GM12878 (cell line): ENCODE measurements at regions of chr11 and their contacts with region 1.

Region 1: DNA sequence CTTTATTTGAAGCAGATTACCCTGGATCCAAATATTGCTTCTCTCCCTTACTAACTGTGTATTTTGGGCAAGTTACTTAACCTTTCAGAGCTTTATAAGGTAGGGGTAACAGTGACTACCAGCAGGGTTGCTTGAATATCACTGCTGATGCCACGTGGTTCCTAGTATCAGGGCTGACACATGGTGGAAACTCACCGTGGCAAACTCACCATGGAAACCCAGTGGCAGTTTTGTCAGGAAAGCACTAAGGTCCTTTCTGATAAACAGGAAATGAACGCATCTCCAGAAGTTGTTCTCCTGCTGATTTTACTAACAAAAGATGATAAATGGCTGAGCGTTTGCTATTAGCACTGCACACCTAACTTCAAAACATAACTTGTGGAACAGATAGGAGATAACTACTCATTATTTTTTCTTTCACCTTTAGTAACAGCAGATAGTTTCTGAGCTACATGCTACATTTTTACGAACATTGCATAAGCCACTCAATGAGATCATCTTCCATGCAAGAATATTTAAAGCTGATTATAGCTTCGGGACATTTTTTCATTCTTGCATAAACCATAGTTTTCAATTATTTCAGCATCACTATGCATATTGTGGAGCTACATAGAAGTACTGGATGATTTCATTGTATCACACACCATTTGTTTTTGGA is 59.7 kb upstream of the RAG2 start:
- DNase-seq: no peak
- ATAC-seq: no peak
- H3K4me3 ChIP-seq: no peak overlapping the region
- H3K27ac ChIP-seq: no peak overlapping the region
- H3K4me1 ChIP-seq: no peaks in the 10 kb centered on the region
- H3K27me3 ChIP-seq: no peaks in the 10 kb centered on the region
- CTCF ChIP-seq: no peak
- EP300 ChIP-seq: no peak
- POLR2A ChIP-seq: no peak
- RAD21 ChIP-seq: no peak

Region 2: DNA sequence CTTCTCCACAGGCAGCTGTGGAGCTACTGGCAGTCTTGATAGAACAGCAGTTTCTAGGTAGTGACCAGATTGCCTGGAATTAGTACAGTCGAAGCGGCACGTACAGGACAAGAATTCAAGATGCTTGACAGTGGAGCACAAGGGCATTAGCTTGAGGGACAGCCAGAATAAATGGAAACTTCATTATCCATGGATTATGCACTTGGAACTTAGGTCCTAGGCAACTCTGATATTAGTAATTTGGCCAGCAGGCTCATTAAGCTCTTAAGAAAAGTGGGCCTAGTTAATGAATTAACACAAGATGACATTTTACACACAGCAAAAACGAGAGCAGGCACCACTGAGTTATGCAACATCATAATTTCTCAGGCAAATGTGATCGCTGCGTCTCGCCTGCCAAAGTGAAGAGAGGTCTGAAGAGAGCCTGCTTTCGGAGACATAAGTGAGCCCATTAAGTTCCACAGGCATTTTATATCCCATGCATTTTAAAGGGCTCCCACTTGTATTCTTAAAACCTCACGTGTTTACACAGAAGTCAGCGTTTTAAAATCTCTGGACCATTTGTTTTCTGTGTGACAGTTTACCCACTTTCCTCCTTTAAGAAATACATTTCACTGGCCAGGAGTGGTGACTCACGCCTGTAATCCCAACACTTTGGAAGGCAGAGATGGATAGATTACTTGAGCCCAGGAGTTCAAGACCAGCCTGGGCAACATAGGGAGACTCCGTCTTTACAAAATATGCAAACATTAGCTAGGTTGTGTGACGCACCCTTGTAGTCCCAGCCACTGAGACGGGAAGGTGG is 434.7 kb before region 1 on chr11:
- CTCF ChIA-PET with region 1: no interaction called
- POLR2A ChIA-PET with region 1: no interaction called
- RAD21 ChIA-PET with region 1: no interaction called
- SMC1A ChIA-PET with region 1: no interaction called
- in situ Hi-C with region 1: no loop called
- intact Hi-C with region 1: no loop called
- DNase-seq: no peak
- ATAC-seq: no peak
- H3K4me3 ChIP-seq: no peak overlapping the region
- H3K27ac ChIP-seq: no peak overlapping the region
- H3K4me1 ChIP-seq: no peaks in the 10 kb centered on the region
- H3K27me3 ChIP-seq: no peaks in the 10 kb centered on the region
- CTCF ChIP-seq: no peak
- EP300 ChIP-seq: no peak
- POLR2A ChIP-seq: no peak
- RAD21 ChIP-seq: no peak

Region 3: GRCh38 chr11:36672813-36673450 is 15.2 kb after region 1 on chr11:
- CTCF ChIA-PET with region 1: interaction called, 17 read pairs
- POLR2A ChIA-PET with region 1: no interaction called
- RAD21 ChIA-PET with region 1: no interaction called
- SMC1A ChIA-PET with region 1: interaction called, 5 read pairs
- in situ Hi-C with region 1: no loop called
- intact Hi-C with region 1: no loop called
- DNase-seq: no peak
- ATAC-seq: peak; percentile 63
- H3K4me3 ChIP-seq: no peak overlapping the region
- H3K27ac ChIP-seq: no peak overlapping the region
- H3K4me1 ChIP-seq: no peaks in the 10 kb centered on the region
- H3K27me3 ChIP-seq: no peaks in the 10 kb centered on the region
- CTCF ChIP-seq: peak; percentile 54 to 66 (median 62)
- EP300 ChIP-seq: no peak
- POLR2A ChIP-seq: no peak
- RAD21 ChIP-seq: peak; percentile 49

Region 4: DNA sequence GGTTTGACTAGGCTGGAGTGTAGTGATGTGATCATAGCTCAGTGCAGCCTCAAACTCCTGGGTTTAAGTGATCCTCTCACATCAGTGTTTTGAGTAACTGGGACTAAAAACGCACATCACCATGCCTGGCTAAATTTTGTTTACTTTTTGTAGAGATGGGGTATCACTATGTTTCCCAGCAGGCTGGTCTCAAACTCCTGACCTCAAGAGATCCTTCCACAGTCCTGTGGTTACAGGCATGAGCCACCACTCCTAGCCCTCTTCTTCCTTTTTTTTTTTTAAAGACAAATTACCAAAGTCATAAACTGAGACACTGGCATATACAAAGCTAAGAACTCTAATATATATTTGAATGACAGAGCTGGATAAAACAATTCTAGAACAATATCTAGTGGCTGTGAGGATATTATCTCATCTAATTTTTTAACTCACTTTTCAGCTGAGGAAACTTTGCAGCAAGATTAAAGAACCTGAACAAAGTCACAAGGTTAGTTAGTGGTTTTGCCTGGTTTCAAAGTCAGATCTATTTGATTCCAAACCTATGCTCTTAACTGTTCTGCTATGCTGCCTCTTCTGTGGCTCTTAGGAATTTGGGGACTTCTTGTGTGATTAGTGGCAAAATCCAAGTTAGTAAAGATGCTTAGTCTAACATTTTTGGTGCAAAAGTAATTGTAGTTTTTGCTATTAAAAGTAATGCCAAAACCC is 35.6 kb after region 1 on chr11:
- CTCF ChIA-PET with region 1: no interaction called
- POLR2A ChIA-PET with region 1: no interaction called
- RAD21 ChIA-PET with region 1: no interaction called
- SMC1A ChIA-PET with region 1: no interaction called
- in situ Hi-C with region 1: no loop called
- intact Hi-C with region 1: no loop called
- DNase-seq: no peak
- ATAC-seq: no peak
- H3K4me3 ChIP-seq: no peak overlapping the region
- H3K27ac ChIP-seq: no peak overlapping the region
- H3K4me1 ChIP-seq: no peaks in the 10 kb centered on the region
- H3K27me3 ChIP-seq: peaks cover 0 to 3% of the 10 kb centered on the region in 2 experiments; a peak in 2 of 4 replicates
- CTCF ChIP-seq: no peak
- EP300 ChIP-seq: no peak
- POLR2A ChIP-seq: no peak
- RAD21 ChIP-seq: no peak